Activated CD4-positive, alpha-beta memory T cell treated with anti-CD3 and anti-CD28 coated beads, Interleukin-2, amount 10 ng/mL, durations not matched to agents 7 days and 5 days (primary cell): ENCODE measurements at regions of chr3 and their contacts with region 1.

Region 1: DNA sequence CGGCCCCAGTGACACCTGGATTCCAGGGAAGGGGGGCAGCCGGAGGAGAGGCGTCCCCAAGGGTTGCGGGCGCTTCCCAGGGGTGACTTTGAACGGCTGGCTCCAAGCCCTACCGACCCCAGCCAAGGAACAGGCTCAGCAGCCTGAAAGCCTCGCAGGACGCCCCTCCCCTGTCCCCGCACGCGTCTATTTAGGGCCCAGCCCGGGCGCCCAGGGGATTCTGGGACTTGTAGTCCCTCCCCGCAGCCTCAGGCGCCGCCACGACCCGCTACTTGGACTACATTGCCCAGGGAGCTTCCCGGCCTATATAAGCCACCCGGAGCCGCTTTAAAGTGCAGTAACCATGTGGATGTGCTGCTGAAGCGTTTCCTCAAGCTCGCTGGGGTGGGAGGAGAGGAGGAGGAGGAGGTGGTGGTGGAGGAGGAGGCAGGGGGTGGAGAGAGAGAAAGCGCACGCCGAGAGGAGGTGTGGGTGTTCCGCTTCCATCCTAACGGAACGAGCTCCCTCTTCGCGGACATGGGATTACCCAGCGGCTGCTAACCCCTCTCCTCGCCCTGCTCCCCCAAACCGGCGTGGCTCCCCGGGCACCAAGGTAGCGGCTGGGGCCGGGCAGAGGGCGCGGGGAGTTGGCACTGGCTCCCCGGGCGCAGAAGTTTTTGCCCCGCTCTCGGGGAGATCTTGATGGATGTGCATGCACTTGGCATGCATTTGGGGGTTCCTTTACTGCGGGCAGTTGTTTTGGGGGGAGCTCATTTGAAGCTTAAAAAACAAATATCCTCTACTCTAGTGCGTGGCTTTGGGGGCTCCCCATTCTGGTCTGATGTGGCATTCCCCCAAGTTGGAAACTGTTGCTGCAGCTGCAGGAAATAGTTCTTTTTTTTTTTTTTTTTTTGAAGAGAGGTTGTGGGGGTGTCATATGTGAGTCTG is at the start of gene ITPR1:
- DNase-seq: peak; percentile 99
- H3K4me3 Mint-ChIP-seq: peak within 1 kb of the TSS; percentile 82
- H3K27ac Mint-ChIP-seq: peak within 1 kb of the TSS; percentile 65
- H3K4me1 Mint-ChIP-seq: peaks cover 34% of the 10 kb centered on the region
- H3K27me3 Mint-ChIP-seq: peaks cover 19% of the 10 kb centered on the region
- total RNA-seq, gene ITPR1: 59.6 to 64.3 TPM

Region 2: DNA sequence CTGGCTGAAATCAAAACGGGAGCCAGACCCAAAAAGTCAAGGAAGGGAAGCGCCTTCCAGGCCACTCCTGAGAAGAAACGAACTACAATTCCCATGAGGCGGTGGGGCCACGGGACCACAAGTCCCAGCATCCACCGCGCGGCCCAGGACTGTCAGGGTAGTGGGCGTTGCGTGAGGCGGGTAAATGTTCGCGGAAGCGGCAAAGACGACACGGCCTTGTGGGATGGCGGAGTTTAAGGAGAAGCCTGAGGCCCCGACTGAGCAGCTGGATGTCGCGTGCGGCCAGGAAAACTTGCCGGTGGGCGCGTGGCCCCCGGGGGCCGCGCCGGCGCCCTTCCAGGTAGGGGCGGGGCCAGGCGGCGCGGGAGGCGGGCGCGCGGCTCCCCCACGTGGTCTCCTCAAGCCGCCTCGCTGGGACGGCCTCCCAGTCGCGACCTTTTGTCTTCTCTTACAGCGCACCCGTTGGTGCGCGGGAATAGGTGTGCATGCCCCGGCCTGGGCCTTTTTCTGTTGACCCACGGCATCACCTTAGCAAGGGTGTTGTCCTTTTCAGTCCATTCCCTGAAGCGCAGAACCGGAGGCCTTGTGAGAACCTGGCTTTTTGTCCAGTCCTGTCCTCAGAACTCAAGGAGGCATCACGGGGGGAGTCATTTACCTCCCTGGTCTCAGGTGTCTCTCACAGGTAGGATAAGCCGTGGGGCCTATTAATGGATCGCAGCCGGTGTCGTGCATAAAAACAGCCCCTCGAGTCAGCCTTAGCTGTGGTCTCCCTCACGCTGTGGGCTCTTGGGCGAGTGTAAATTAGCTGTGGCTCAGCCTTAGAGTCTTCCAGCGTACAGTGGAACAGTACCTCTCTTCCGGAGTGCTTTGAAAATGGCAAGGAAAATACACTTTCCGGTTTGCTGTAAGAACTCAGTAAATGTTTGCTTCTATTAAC is 189.8 kb before region 1 on chr3 and contains the start of gene SETMAR:
- CTCF ChIA-PET with region 1: no interaction called
- POLR2A ChIA-PET with region 1: interaction called, 17 read pairs
- DNase-seq: peak; percentile 86
- H3K4me3 Mint-ChIP-seq: peak within 1 kb of the TSS; percentile 98
- H3K27ac Mint-ChIP-seq: peak within 1 kb of the TSS; percentile 94
- H3K4me1 Mint-ChIP-seq: peaks cover 21% of the 10 kb centered on the region
- H3K27me3 Mint-ChIP-seq: peaks cover 2% of the 10 kb centered on the region
- total RNA-seq, gene SETMAR: 5.2 to 6.2 TPM

Region 3: DNA sequence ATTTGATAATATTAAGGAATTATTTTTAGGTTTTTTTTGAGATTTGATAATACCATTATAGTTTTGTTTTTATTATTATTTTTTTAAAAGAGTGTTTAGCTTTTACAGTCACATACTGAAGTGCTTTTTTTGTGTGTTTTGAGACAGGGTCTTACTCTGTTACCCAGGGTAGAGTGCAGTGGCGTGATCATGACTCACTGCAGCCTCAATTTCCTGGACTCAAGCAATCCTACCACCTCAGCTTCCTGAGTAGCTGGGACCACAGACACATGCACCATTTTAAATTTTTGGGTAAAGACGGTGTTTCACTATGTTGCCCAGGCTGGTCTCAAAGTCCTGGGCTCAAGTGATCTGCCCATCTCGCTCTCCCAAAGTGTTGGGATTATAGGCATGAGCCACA is 99.2 kb before region 1 on chr3:
- CTCF ChIA-PET with region 1: no interaction called
- POLR2A ChIA-PET with region 1: interaction called, 27 read pairs
- DNase-seq: peak; percentile 66
- H3K4me3 Mint-ChIP-seq: no peak overlapping the region
- H3K27ac Mint-ChIP-seq: peak overlapping the region; percentile 90
- H3K4me1 Mint-ChIP-seq: peaks cover 47% of the 10 kb centered on the region
- H3K27me3 Mint-ChIP-seq: no peaks in the 10 kb centered on the region

Region 4: GRCh38 chr3:4474683-4475490 is 18.4 kb before region 1 on chr3:
- CTCF ChIA-PET with region 1: interaction called, 3 read pairs
- POLR2A ChIA-PET with region 1: interaction called, 20 read pairs
- DNase-seq: peak; percentile 36
- H3K4me3 Mint-ChIP-seq: no peak overlapping the region
- H3K27ac Mint-ChIP-seq: no peak overlapping the region
- H3K4me1 Mint-ChIP-seq: peaks cover 10% of the 10 kb centered on the region
- H3K27me3 Mint-ChIP-seq: peaks cover 19% of the 10 kb centered on the region

Region 5: DNA sequence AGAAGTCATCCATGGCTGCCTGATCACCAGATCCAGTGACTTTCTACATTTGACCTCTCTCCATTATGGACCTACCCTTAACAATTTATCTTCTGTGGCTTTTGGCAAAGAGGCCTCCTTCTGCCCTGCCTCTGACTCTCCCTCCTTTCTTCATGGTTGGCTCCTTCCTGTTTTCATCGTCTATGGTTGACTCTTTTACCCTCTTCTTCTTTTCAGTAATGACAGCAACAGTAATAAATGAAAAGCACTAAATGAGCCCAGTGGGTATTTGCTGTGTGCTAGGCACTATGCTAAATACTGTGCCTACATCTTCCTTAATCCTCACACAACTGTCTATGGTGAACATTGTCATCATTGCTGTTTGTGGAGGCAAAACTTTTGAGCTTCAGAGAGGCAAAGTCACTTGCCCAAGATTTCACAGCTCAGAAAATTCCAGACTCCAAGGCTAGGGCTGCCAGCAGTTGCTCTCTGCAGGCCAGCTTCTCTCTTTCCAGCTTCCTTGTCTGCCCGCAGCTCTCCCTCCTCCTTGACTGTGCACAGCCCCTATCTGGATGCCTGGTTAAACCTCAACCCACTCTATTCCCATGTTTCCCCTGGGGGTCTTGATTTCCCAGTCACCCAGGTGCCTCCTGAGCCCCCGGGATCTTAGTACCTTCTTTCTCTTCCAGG is 24.5 kb after region 1 on chr3:
- CTCF ChIA-PET with region 1: interaction called, 31 read pairs
- POLR2A ChIA-PET with region 1: interaction called, 38 read pairs
- DNase-seq: no peak
- H3K4me3 Mint-ChIP-seq: no peak overlapping the region
- H3K27ac Mint-ChIP-seq: peak overlapping the region; percentile 13
- H3K4me1 Mint-ChIP-seq: peaks cover 31% of the 10 kb centered on the region
- H3K27me3 Mint-ChIP-seq: no peaks in the 10 kb centered on the region